Naive thymus-derived CD4-positive, alpha-beta T cell (primary cell): ENCODE measurements at regions of chr2 and their contacts with region 1.

Region 1: DNA sequence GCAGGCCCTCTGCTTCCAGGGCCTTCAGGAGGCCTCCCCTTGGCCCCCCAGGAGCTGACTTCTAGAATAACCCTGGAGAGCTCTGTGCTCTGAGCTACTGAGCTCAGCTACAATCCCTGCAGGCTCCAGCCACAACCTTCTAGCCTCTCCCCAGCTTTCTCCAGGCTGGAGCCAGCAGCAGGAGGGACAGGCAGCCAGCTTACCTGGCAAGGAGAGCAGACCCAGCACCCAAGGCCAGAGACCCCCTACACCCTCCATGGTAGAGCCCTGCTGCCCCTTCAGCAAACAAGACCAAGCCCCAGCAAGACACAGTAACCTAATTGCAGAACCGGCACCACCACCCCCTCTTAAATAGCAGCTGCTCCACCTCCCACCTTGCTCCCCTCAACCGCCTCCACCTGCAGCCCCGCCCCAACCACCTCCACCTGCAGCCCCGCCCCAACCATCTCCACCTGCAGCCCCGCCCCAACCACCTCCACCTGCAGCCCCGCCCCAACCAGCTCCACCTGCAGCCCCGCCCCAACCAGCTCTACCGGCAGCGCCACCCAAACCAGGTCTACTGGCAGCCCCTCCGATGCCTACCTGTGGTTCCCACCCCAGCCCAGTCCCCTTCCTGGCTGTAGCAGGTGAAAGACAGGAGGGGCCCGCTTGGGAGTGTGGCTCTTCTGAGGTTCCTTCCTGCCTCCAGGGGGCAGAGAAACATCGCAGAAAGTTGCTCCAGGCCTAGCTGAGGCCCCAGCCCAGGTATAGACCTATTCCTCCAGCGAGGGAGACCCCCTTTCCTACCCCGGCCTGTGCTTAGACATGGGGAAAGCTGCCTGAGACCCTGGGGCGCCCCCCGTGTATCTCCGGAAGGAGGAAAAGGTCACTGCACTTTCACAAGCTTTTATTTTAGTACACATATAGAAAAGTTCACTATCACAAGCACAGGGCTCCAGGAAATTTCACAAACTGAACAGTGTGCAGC is at the start of gene ASTL:
- DNase-seq: peak in 8 of 9 donors; percentile 56 to 78 (median 73)
- ATAC-seq: peak; percentile 68
- H3K4me3 ChIP-seq: no peak within 1 kb of the TSS
- H3K4me3 Mint-ChIP-seq: no peak within 1 kb of the TSS
- H3K27ac ChIP-seq: no peak within 1 kb of the TSS
- H3K27ac Mint-ChIP-seq: peak within 1 kb of the TSS in 7 of 9 donors; percentile 25 to 70 (median 56)
- H3K4me1 ChIP-seq: peaks cover 18 to 20% of the 10 kb centered on the region in 2 donors
- H3K4me1 Mint-ChIP-seq: peaks cover 8 to 28% (median 17%) of the 10 kb centered on the region in 7 donors
- H3K27me3 ChIP-seq: no peaks in the 10 kb centered on the region
- H3K27me3 Mint-ChIP-seq: no peaks in the 10 kb centered on the region
- total RNA-seq, gene ASTL: 0.65 to 7.5 (median 0.86) TPM

Region 2: GRCh38 chr2:96091533-96092334 is 46.7 kb before region 1 on chr2:
- CTCF ChIA-PET with region 1: no interaction called
- POLR2A ChIA-PET with region 1: no interaction called
- intact Hi-C with region 1: no loop called
- DNase-seq: peak in 1 of 9 donors; percentile 11
- ATAC-seq: no peak
- H3K4me3 ChIP-seq: no peak overlapping the region
- H3K4me3 Mint-ChIP-seq: no peak overlapping the region
- H3K27ac ChIP-seq: no peak overlapping the region
- H3K27ac Mint-ChIP-seq: peak overlapping the region in 1 of 9 donors; percentile 41
- H3K4me1 ChIP-seq: no peaks in the 10 kb centered on the region
- H3K4me1 Mint-ChIP-seq: peaks cover 0 to 4% (median 0%) of the 10 kb centered on the region in 7 donors
- H3K27me3 ChIP-seq: no peaks in the 10 kb centered on the region
- H3K27me3 Mint-ChIP-seq: peaks cover 0 to 12% (median 0%) of the 10 kb centered on the region in 5 donors

Region 3: GRCh38 chr2:96164459-96165184 is 26.2 kb after region 1 on chr2:
- CTCF ChIA-PET with region 1: interaction called, 25 read pairs
- POLR2A ChIA-PET with region 1: interaction called, 106 read pairs
- intact Hi-C with region 1: no loop called
- DNase-seq: peak in 8 of 9 donors; percentile 36 to 67 (median 43)
- ATAC-seq: peak; percentile 80
- H3K4me3 ChIP-seq: peak overlapping the region; percentile 39
- H3K4me3 Mint-ChIP-seq: peak overlapping the region; percentile 41 to 80 (median 73)
- H3K27ac ChIP-seq: peak overlapping the region; percentile 84
- H3K27ac Mint-ChIP-seq: peak overlapping the region; percentile 75 to 98 (median 95)
- H3K4me1 ChIP-seq: peaks cover 24 to 55% of the 10 kb centered on the region in 2 donors
- H3K4me1 Mint-ChIP-seq: peaks cover 25 to 47% (median 42%) of the 10 kb centered on the region in 7 donors
- H3K27me3 ChIP-seq: no peaks in the 10 kb centered on the region
- H3K27me3 Mint-ChIP-seq: no peaks in the 10 kb centered on the region

Region 4: GRCh38 chr2:96174251-96175144 is 36.0 kb after region 1 on chr2:
- CTCF ChIA-PET with region 1: interaction called, 401 read pairs
- POLR2A ChIA-PET with region 1: interaction called, 60 read pairs
- intact Hi-C with region 1: loop called (anchors 1 kb)
- DNase-seq: peak; percentile 65 to 86 (median 78)
- ATAC-seq: peak; percentile 97
- H3K4me3 ChIP-seq: no peak overlapping the region
- H3K4me3 Mint-ChIP-seq: peak overlapping the region in 1 of 10 donors; percentile 23
- H3K27ac ChIP-seq: no peak overlapping the region
- H3K27ac Mint-ChIP-seq: peak overlapping the region in 8 of 9 donors; percentile 28 to 96 (median 62)
- H3K4me1 ChIP-seq: peaks cover 4 to 8% of the 10 kb centered on the region in 2 donors
- H3K4me1 Mint-ChIP-seq: peaks cover 6 to 21% (median 13%) of the 10 kb centered on the region in 7 donors
- H3K27me3 ChIP-seq: no peaks in the 10 kb centered on the region
- H3K27me3 Mint-ChIP-seq: no peaks in the 10 kb centered on the region

Region 5: GRCh38 chr2:96180521-96180920 is 42.1 kb after region 1 on chr2:
- CTCF ChIA-PET with region 1: interaction called, 401 read pairs
- POLR2A ChIA-PET with region 1: interaction called, 60 read pairs
- intact Hi-C with region 1: no loop called
- DNase-seq: no peak
- ATAC-seq: no peak
- H3K4me3 ChIP-seq: no peak overlapping the region
- H3K4me3 Mint-ChIP-seq: no peak overlapping the region
- H3K27ac ChIP-seq: no peak overlapping the region
- H3K27ac Mint-ChIP-seq: peak overlapping the region in 1 of 9 donors; percentile 13
- H3K4me1 ChIP-seq: peaks cover 0 to 9% of the 10 kb centered on the region in 2 donors
- H3K4me1 Mint-ChIP-seq: peaks cover 0 to 22% (median 12%) of the 10 kb centered on the region in 7 donors
- H3K27me3 ChIP-seq: no peaks in the 10 kb centered on the region
- H3K27me3 Mint-ChIP-seq: no peaks in the 10 kb centered on the region